ENCODE measurements at regions of chr16 and their contacts with region 1.

Region 1: DNA sequence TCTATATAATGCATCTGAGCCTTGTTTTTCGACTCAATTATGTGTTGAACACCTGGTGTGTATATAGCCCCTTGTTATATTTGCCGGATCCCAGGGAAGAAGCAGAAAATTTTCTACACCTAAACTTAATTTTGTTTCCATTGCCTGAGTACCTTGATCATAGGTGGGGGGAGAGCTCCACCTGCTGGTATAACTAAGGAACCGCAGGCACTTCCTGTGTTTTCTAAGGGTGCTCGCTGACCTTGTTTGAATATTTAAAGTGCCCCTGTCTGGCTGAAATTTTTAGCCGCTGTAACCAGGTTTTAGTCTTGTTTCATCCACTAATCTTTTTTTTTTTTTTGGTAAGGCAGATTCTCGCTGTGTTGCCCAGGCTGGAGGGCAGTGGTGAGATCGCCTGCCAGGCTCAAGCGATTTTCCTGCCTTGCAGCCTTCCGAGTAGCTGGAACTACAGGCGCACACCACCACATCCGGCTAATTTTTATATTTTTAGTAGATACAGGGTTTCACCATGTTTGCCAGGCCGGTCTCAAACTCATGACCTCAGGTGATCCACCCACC is 6.5 kb upstream of the NUBP1 start:
- DNase-seq: peak; percentile 64
- H3K4me3 Mint-ChIP-seq: no peak overlapping the region
- H3K27ac Mint-ChIP-seq: peak overlapping the region; percentile 38
- H3K4me1 Mint-ChIP-seq: peaks cover 34% of the 10 kb centered on the region
- H3K27me3 Mint-ChIP-seq: peaks cover 2% of the 10 kb centered on the region

Region 2: DNA sequence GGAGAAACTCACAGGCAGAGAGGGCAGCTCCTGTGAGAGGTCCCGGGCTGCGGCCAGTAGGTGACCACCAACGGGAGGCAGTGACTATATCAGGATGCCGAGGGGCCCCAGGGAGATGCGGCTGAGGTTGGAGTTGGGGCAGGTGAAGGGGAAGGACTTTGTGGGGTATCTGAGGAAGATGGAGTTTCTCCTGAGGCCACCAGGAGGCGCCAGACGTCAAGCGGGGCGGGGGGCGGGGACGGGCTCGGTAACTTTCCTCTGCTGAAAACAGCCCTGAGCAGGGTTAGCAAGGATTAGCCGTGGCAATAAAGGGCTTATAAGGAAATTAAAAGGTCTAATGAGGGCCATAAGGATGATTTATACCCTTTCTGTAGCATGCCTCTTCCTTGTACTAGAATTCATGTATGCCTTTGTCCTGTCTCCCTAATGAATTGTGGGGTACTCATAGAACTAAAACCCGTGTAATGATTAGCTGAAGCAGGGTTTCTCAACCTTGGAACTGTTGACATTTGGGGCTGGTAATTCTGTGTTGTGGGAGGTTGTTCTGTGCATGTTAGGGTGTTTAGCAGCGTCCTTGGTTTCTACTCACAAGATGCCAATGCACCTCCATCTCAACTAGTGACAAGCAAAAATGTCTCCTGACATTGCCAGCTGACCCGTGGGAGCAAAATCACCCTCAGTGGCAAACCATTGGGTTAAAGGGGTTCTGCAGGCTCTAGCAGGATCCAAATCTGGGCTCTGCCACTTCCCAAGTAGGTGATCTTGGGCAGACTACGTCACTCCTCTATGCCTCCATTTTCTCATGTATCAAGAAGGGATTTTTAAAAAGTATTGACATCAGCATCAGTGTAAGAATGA is 480.1 kb before region 1 on chr16:
- intact Hi-C with region 1: loop called (anchors 2 kb)
- DNase-seq: peak; percentile 12
- H3K4me3 Mint-ChIP-seq: no peak overlapping the region
- H3K27ac Mint-ChIP-seq: no peak overlapping the region
- H3K4me1 Mint-ChIP-seq: peaks cover 6% of the 10 kb centered on the region
- H3K27me3 Mint-ChIP-seq: peaks cover 3% of the 10 kb centered on the region

Region 3: DNA sequence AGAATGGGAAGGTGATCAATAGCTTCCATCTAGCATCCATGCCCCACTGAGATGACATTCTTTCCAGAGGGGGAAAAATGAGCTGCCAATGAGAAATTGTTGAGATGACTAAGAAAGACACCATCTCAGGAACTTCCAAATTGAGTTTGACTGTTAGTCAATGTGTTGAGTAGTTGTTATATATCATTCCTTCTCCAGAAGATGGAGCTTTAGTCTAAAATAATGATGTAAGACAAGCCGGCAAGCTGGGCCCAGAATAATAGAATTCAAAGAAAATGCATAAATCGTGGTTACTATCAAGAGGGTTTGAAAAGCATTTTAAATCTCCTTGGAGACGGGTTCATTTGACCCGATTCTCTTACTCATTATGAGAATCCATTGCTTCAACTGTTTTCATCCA is 422.3 kb before region 1 on chr16:
- intact Hi-C with region 1: loop called (anchors 5 kb)
- DNase-seq: no peak
- H3K4me3 Mint-ChIP-seq: no peak overlapping the region
- H3K27ac Mint-ChIP-seq: no peak overlapping the region
- H3K4me1 Mint-ChIP-seq: peaks cover 6% of the 10 kb centered on the region
- H3K27me3 Mint-ChIP-seq: no peaks in the 10 kb centered on the region

Region 4: DNA sequence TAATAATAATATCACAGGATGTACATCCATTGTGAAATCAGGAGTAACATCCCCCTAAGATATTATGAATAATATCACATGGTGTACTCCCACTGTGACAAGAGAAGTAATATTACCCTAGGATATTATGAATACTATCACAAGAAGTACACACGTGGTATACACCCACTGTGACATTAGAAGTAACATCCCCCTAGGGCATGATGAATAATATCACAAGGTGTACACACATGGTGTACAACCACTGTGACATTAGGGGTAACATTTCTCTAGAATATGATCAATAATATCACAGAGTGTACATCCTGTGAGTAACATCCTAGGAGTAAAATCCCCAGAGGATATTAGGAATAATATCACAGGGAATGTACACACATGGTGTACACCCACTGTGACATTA is 37.4 kb before region 1 on chr16:
- intact Hi-C with region 1: loop called (anchors 5 kb)
- DNase-seq: no peak
- H3K4me3 Mint-ChIP-seq: no peak overlapping the region
- H3K27ac Mint-ChIP-seq: no peak overlapping the region
- H3K4me1 Mint-ChIP-seq: no peaks in the 10 kb centered on the region
- H3K27me3 Mint-ChIP-seq: no peaks in the 10 kb centered on the region

Measured in activated T-helper 2 cell treated with anti-CD3 and anti-CD28 coated beads, Interferon-gamma antibody, Interleukin-2, Interleukin-4, amounts not matched to agents 10 μg/mL and 5 μg/mL and 100 μg/mL, durations not matched to agents 14 hours and 24 hours and 36 hours (primary cell).